ENCODE measurements at regions of chr10 and their contacts with region 1.

Region 1: GRCh38 chr10:125149036-125149675 is 11.2 kb downstream of the CTBP2 start:
- DNase-seq: no peak
- H3K4me3 Mint-ChIP-seq: no peak overlapping the region
- H3K27ac Mint-ChIP-seq: no peak overlapping the region
- H3K4me1 Mint-ChIP-seq: peaks cover 1% of the 10 kb centered on the region
- H3K27me3 Mint-ChIP-seq: peaks cover 56% of the 10 kb centered on the region

Region 2: DNA sequence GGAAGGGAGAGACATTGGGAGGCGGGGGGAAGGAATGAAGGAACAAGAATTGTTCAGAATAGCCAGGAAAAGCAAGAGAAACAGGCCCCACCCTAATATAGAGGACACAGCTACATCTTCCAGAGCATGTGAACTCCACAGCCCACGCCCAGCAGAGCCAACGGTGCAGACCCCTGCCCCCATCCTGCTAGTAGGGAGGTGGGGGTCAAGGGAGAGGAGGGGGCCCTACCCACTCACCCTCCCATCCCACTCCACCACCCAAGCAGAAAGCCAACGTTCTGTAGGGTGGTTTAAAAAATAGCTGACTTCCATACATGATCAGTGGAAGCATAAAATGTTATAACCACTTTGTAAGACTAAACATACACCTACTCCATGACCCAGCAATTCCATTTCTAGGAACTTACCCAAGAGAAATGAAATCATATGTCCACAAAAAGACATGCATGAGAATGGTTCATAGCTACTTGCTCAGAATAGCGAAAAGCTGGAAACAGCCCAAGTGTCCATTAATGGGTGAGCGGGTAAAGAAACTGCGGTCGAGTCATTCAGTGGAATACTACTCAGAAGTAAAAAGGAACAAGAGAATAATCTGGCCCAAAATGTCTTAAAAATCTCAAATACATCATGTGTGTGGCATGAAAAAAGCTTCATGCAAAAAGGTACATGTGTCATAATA is 20.6 kb before region 1 on chr10:
- CTCF ChIA-PET with region 1: no interaction called
- intact Hi-C with region 1: loop called (anchors 1 kb)
- DNase-seq: no peak
- H3K4me3 Mint-ChIP-seq: no peak overlapping the region
- H3K27ac Mint-ChIP-seq: no peak overlapping the region
- H3K4me1 Mint-ChIP-seq: no peaks in the 10 kb centered on the region
- H3K27me3 Mint-ChIP-seq: no peaks in the 10 kb centered on the region

Region 3: DNA sequence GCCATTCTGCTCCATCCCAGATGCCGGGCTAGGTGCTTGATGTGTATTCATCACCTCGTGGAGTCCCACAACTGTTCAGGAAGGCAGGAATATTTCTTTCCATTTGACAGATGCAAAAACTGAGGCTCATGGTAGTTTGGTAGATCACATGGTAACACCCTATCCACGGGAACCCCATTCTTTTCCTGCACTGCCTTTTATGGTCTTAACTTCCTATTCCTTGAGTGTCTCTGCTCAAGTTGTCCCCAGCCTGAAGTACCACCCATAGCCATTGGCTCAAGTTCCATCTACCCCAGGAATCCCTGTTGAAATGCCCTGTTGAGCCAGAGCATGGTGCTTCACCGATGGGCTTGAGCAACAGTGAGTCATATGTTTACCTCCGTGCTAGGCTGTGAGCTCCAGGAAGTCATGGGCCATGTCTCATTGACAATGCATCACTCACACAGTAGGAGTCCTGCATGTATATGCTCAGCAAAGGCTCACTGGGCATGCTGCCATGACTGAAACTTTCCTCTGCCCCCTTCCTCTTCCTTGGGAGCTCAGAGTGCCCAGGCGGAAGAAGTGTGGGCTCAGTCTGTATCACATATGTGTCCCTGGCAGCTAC is 1310.8 kb after region 1 on chr10:
- CTCF ChIA-PET with region 1: no interaction called
- intact Hi-C with region 1: no loop called
- DNase-seq: no peak
- H3K4me3 Mint-ChIP-seq: no peak overlapping the region
- H3K27ac Mint-ChIP-seq: no peak overlapping the region
- H3K4me1 Mint-ChIP-seq: no peaks in the 10 kb centered on the region
- H3K27me3 Mint-ChIP-seq: peaks cover 1% of the 10 kb centered on the region

Measured in activated naive CD4-positive, alpha-beta T cell treated with anti-CD3 and anti-CD28 coated beads for 36 hours (primary cell).